Cardiac septum (tissue), 1 donor: ENCODE measurements at regions of chr17 and their contacts with region 1.

Region 1: DNA sequence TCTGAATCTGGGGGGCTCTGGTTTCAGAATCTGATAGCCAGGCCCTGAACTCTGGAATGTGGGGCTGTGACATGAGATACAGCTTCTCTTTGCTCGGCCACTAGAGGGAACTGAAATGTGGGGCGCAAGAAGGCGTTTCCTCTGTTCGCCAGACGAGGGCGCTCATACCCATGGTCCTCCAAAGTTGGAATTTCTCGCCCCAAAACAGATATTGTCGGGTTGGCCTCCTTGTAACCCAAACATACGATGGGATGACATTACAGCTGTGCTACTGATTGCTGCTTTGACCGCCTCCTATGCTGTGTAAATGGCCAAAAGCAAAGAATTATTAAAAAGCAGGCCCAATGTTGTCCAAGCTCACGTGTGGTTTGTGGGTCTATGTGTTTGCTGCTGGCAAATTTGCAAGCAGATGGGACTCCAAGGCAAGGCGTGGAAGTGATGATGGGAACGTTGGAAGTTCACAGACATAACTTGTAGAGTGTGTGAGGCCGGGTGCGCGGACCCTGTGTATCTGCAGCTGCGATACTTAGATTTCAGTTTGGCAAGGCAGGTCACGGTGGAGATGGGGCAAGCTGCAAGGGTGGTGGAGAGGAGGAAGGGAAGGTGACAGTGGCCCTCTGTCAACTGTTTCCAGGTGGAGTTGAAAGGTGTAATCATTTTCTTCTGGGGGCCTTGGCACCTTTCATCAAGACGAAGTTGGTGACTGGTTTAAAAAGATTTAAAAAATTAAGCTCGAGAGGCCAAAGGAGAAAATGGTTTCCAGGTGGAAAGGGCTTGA is 13.0 kb upstream of the MSI2 start:
- DNase-seq: no peak

Region 2: GRCh38 chr17:57313097-57313835 is 69.9 kb after region 1 on chr17:
- intact Hi-C with region 1: no loop called
- DNase-seq: no peak

Region 3: GRCh38 chr17:57366558-57367351 is 123.4 kb after region 1 on chr17:
- intact Hi-C with region 1: loop called (anchors 5 kb)
- DNase-seq: no peak

Region 4: GRCh38 chr17:57833179-57833939 is 590.0 kb after region 1 on chr17:
- intact Hi-C with region 1: loop called (anchors 10 kb)
- DNase-seq: peak; percentile 78